SK-N-SH (cell line): ENCODE measurements at regions of chr16 and their contacts with region 1.

Region 1: GRCh38 chr16:57462209-57462977 is at the start of gene POLR2C:
- DNase-seq: peak; percentile 92
- H3K4me3 ChIP-seq: peak within 1 kb of the TSS; percentile 72 to 97
- H3K27ac ChIP-seq: peak within 1 kb of the TSS; percentile 12 to 89; a peak in 2 of 4 replicates
- H3K4me1 ChIP-seq: peaks cover 8 to 13% of the 10 kb centered on the region in 2 experiments; a peak in 1 of 4 replicates
- H3K27me3 ChIP-seq: no peaks in the 10 kb centered on the region
- CTCF ChIP-seq: peak; percentile 85
- EP300 ChIP-seq: no peak; a peak in 1 of 4 replicates
- RAD21 ChIP-seq: peak; percentile 49
- polyA plus RNA-seq, gene POLR2C: 160 and 178 TPM in 2 replicates

Region 2: DNA sequence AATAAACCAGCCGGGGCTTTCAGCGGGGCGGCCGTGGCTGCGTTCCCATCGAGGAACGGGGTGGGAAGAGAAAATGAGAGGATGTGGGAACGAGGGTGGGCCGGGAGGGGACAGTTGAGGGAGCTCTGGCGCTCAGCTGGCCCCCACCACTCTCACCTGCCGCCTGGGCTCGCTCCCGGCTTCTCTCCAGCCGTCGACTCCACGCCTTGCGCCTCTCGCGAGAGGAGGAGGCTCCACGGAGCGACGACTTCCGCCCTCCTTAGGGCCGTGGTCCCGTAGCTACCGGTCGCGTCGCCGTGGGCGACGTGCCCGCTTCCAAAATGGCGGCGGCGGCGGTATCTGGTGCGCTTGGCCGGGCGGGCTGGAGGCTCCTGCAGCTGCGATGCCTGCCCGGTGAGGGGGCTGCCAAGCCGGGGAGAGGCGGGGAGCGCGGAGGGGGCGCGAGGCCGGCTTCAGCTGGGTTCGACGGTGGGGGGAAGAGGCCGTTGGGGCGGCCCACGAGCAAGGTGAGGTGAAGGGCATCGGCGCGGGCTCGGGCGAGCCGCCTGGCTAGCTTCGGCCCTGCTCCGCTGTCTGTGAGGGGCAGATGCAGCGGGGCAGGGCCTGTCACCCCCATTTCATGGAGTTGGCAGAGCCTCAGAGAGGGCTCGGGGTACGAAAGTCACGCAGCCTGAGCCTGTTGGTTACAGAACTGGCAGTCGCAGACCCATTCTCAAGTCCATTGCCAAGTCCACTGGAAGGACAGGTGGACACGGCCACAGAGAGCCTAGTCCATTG is 15.0 kb before region 1 on chr16 and contains the starts of genes CIAPIN1 and COQ9:
- CTCF ChIA-PET with region 1: interaction called, 24 read pairs
- POLR2A ChIA-PET with region 1: interaction called, 9 read pairs
- DNase-seq: peak; percentile 96
- H3K4me3 ChIP-seq: peak within 1 kb of the TSS; percentile 90 to 96
- H3K27ac ChIP-seq: peak within 1 kb of the TSS; percentile 65 to 84; a peak in 3 of 4 replicates
- H3K4me1 ChIP-seq: peaks cover 3 to 9% of the 10 kb centered on the region in 2 experiments; a peak in 2 of 4 replicates
- H3K27me3 ChIP-seq: no peaks in the 10 kb centered on the region
- CTCF ChIP-seq: no peak
- EP300 ChIP-seq: no peak
- RAD21 ChIP-seq: no peak
- polyA plus RNA-seq, gene CIAPIN1: 43.6 and 63.3 TPM in 2 replicates
- polyA plus RNA-seq, gene COQ9: 81.2 and 104 TPM in 2 replicates

Region 3: GRCh38 chr16:57475711-57476339 is 13.4 kb after region 1 on chr16:
- CTCF ChIA-PET with region 1: interaction called, 58 read pairs
- POLR2A ChIA-PET with region 1: interaction called, 7 read pairs
- DNase-seq: peak; percentile 83
- H3K4me3 ChIP-seq: no peak overlapping the region; a peak in 1 of 4 replicates
- H3K27ac ChIP-seq: peak overlapping the region in 1 of 2 experiments; percentile 90; a peak in 2 of 4 replicates
- H3K4me1 ChIP-seq: peaks cover 14 to 97% of the 10 kb centered on the region in 2 experiments
- H3K27me3 ChIP-seq: no peaks in the 10 kb centered on the region
- CTCF ChIP-seq: peak; percentile 49
- EP300 ChIP-seq: no peak
- RAD21 ChIP-seq: peak; percentile 47

Region 4: DNA sequence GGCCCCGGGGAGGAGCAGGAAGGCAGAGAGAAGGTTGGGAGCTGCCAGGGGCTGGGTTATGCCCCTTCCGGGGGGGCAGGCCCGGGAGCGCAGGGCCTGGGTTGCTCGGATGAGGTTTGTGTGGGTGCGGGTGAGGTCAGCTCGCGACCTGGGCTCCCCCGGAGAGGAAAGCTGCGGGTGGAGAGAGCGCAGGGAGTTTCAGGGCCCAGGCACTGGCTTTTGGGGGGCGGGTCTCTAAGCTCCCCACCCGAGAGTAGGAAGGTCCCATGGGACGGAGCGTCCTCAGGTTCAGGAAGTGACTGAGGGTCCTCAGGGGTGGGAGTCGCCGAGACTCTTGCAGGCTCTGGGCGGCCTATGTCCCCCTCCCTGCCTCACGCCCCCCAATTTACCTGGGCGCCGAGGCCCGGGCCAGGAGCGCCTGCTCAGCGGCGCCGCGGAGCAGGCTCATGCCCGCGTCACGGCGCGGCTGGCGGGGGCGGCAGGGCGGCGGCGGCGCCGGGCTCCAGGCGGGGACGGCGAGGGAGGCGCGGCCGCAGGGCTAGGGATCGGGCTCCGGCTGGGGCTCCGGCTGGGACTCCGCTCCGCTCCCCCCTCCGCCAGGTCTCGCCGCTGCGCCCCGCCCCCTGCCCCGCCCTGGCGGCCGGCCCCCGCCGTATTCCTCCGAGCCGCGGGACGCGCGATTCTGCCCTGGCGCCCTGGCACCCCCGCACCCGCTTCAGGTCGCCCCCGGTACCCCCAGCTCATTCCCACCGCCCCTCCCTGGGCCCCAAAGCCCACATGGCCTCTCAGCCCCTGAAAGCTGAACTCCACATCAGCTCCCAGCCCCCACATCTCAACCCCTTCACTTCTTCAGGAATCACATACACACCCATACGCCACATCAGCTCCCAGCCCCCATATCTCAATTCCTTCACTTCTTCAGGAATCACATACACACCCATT is 23.8 kb after region 1 on chr16 and contains the start of gene DOK4:
- CTCF ChIA-PET with region 1: interaction called, 58 read pairs
- POLR2A ChIA-PET with region 1: interaction called, 10 read pairs
- DNase-seq: peak; percentile 98
- H3K4me3 ChIP-seq: peak within 1 kb of the TSS; percentile 67 to 83
- H3K27ac ChIP-seq: peak within 1 kb of the TSS in 1 of 2 experiments; percentile 94; a peak in 2 of 4 replicates
- H3K4me1 ChIP-seq: peaks cover 0 to 42% of the 10 kb centered on the region in 2 experiments; a peak in 1 of 4 replicates
- H3K27me3 ChIP-seq: no peaks in the 10 kb centered on the region
- CTCF ChIP-seq: no peak
- EP300 ChIP-seq: no peak
- RAD21 ChIP-seq: no peak
- polyA plus RNA-seq, gene DOK4: 28.4 and 36.9 TPM in 2 replicates

Region 5: DNA sequence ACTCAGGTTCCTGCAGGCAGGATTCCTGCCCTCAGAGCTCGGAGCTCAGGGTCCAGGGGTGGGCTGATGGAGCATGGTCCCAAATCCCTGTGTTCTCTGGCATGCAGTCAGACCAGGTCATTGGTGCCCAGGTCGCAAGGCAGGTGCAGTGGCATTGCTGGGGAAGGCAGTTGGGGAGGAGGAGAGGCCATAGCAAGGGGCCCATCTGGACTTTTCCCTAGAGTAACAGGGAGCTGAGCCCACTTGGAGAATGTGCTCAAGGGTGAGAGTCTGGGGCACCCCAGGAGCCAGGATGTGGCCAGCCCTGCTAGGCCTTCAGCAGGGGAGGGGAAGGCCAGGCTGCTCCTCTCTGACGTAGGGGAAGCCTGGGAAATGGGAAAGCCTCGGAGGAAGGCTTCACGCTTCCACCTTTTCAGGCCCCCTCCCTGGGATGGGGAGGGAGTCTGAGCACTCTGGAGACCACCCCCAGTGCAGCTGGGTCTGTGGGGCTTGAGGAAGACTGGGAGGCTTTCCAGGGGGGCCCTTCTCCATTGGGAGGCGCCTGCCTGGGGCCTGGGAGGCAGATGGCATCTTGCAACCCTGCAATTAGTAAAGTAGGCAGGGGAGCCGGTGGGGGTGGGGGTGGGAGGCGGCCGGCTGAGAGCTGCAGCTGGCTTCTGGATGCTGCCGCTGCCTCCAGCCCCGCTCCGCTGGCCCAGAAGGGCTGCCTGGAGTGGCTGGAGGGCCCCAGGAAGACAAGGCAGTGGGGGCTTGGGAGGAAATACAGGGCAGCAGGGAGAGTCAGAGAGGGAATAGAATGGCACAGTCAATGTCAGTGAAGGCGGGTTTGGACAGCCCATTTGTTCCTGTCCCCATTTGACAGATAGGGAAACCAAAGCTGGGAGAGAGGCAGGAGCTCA is 45.0 kb after region 1 on chr16:
- CTCF ChIA-PET with region 1: interaction called, 218 read pairs
- POLR2A ChIA-PET with region 1: interaction called, 17 read pairs
- DNase-seq: peak; percentile 82
- H3K4me3 ChIP-seq: no peak overlapping the region
- H3K27ac ChIP-seq: peak overlapping the region in 1 of 2 experiments; percentile 99; a peak in 3 of 4 replicates
- H3K4me1 ChIP-seq: peaks cover 0 to 56% of the 10 kb centered on the region in 2 experiments; a peak in 1 of 4 replicates
- H3K27me3 ChIP-seq: no peaks in the 10 kb centered on the region
- CTCF ChIP-seq: no peak
- EP300 ChIP-seq: 0 out of 4 replicates have a peak, but pooled peaks of 1 of the 2 experiments have one; percentile 24
- RAD21 ChIP-seq: no peak

Region 6: DNA sequence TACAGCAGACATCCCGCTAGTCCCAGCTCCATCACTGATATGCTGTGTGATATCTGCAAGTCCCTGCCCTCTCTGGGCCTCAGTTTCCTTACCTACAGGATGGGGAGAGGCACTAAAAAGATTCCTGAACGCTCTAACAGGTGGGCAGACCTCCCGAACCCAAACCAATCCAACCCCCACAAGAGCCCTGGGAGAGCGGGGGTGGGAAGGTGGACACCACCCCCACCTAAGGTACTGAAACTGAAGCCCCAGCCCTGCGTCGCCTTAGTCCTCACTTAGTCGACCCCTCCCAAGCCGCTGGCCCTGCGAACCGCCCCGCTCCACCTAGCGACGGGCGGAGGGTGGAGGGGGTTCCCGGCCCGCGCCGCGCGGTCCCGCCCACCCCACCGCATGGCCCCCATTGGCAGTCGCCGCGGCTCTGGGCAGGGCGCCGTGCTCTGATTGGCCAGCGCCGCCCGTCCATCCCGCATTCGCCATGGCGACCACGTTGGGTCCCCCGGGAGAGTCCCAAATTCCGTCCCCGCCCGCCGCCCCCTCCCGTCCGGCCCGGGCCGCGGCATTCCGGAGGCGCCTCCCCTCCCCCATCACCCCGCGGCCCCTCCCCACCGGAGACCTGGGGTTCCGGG is 73.4 kb after region 1 on chr16:
- CTCF ChIA-PET with region 1: interaction called, 10 read pairs
- POLR2A ChIA-PET with region 1: no interaction called
- DNase-seq: peak; percentile 99
- H3K4me3 ChIP-seq: peak overlapping the region; percentile 70 to 90
- H3K27ac ChIP-seq: peak overlapping the region; percentile 70 to 81
- H3K4me1 ChIP-seq: peaks cover 19 to 41% of the 10 kb centered on the region in 2 experiments; a peak in 3 of 4 replicates
- H3K27me3 ChIP-seq: no peaks in the 10 kb centered on the region
- CTCF ChIP-seq: no peak
- EP300 ChIP-seq: no peak
- RAD21 ChIP-seq: no peak